ENCODE measurements at regions of chr4 and their contacts with region 1.

Region 1: DNA sequence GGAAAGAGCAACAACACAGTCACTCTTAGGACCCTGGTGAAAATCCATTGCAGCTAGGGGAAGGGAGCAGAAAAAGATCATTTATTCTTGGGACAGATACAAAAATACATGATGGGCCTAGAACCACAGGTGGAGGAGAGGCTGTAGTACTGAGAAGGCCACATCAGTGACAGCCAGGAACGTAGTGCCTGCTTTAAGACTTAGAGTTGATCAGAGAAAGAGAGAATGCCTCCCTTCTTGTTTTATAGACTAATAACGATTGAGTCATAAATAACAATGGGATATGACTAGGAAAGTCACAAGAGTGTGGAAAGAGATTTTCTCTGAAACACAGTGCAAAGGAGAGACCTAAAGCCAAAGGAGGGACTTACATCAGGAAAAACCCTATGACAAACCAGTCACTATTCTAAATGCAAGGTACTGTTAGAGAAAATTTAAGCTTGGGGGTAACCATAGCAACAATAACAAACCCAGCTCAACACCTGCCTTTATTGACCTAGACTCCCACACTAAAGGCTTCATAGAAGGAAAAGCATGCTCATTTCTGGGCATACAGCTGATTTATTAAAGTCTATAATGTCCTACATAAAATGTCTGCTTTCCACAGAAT is 1015.0 kb upstream of the GRID2 start:
- DNase-seq: no peak
- H3K4me3 ChIP-seq: no peak overlapping the region
- H3K27ac ChIP-seq: no peak overlapping the region
- H3K4me1 ChIP-seq: peaks cover 0 to 9% (median 0%) of the 10 kb centered on the region in 4 donors
- H3K27me3 ChIP-seq: no peaks in the 10 kb centered on the region
- CTCF ChIP-seq: no peak
- EP300 ChIP-seq: no peak
- POLR2A ChIP-seq: no peak

Region 2: GRCh38 chr4:91035276-91035675 is 253.5 kb before region 1 on chr4:
- in situ Hi-C with region 1: no loop called
- intact Hi-C with region 1: loop called (anchors 5 kb)
- DNase-seq: no peak
- H3K4me3 ChIP-seq: no peak overlapping the region
- H3K27ac ChIP-seq: no peak overlapping the region
- H3K4me1 ChIP-seq: no peaks in the 10 kb centered on the region
- H3K27me3 ChIP-seq: no peaks in the 10 kb centered on the region
- CTCF ChIP-seq: no peak
- EP300 ChIP-seq: no peak
- POLR2A ChIP-seq: no peak

Region 3: GRCh38 chr4:91092398-91093090 is 196.3 kb before region 1 on chr4:
- in situ Hi-C with region 1: no loop called
- intact Hi-C with region 1: no loop called
- DNase-seq: no peak
- H3K4me3 ChIP-seq: no peak overlapping the region
- H3K27ac ChIP-seq: no peak overlapping the region
- H3K4me1 ChIP-seq: no peaks in the 10 kb centered on the region
- H3K27me3 ChIP-seq: no peaks in the 10 kb centered on the region
- CTCF ChIP-seq: no peak
- EP300 ChIP-seq: no peak
- POLR2A ChIP-seq: no peak